ENCODE measurements at regions of chr7 and their contacts with region 1.

Region 1: GRCh38 chr7:151631968-151632749 is 112.5 kb upstream of the RHEB start:
- DNase-seq: peak; percentile 86
- H3K4me3 ChIP-seq: peak overlapping the region; percentile 71 to 82
- H3K27ac ChIP-seq: peak overlapping the region; percentile 84 to 95
- H3K4me1 ChIP-seq: peaks cover 3% of the 10 kb centered on the region
- H3K27me3 ChIP-seq: no peaks in the 10 kb centered on the region
- CTCF ChIP-seq: peak; percentile 43 to 54 (median 52)
- POLR2A ChIP-seq: peak; percentile 61

Region 2: DNA sequence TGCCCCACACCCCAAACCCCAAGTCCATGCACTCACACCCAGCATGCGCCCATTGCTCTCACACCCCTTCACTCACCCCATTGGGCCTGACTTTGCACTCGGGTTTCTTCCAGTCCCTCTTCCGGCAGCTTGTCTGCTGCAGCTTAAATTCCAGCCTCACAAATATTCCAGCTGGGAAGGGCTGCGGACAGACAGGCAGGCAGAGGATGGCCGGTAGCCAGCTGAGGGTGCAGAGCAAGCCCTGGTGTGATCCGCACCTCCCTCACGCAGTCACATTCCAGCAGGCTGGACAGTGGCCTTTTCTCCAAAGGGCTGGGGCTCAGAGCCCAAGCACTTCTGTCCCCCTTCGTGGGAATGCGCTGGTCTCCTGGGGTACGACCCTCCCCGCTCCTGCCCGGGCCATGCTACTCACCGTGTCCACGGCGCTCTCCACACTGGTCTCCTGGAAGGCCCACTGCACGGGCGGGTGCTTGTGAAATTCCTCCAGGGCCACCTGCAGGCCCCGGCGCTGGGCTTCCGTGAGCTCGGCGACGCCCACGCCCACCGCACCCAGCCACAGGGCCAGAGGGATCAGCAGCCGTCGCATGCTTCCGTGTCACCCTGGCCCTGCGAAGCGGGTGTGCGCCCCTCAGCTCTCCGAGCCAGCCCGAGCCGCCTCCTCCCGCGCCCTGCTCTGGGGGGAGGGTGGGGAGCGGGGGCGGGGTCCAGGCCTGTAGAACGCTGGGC is 1292.0 kb before region 1 on chr7:
- intact Hi-C with region 1: no loop called
- DNase-seq: no peak
- H3K4me3 ChIP-seq: peak overlapping the region; percentile 33 to 41
- H3K27ac ChIP-seq: peak overlapping the region; percentile 70 to 81
- H3K4me1 ChIP-seq: no peaks in the 10 kb centered on the region
- H3K27me3 ChIP-seq: peaks cover under 1% of the 10 kb centered on the region
- CTCF ChIP-seq: no peak
- POLR2A ChIP-seq: no peak

Region 3: DNA sequence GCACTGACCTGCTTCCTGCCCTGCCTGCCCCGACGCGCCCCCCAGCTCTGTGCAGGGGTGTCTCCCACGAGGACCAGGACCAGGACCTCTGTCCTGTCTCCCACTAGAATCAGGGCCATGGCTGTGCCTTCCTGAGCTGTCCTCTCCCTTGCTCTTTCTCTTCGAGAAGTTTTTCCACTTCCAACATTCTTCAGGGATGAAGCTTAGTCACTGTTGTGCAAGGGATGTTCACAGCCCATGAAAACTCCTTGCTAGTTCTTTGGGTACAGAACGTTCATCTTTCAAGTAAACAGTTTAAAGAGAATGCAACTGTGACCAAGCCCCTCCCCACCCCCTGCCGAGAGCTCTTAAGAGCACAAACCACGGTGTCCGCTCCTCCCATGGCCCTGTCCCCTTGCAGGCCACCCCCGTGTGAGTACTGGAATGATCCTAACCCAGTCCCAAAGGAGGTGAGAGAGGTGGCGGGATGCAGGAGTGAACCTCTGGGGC is 48.6 kb after region 1 on chr7:
- intact Hi-C with region 1: loop called (anchors 5 kb)
- DNase-seq: peak; percentile 58
- H3K4me3 ChIP-seq: no peak overlapping the region
- H3K27ac ChIP-seq: peak overlapping the region; percentile 85
- H3K4me1 ChIP-seq: peaks cover 12% of the 10 kb centered on the region
- H3K27me3 ChIP-seq: no peaks in the 10 kb centered on the region
- CTCF ChIP-seq: no peak
- POLR2A ChIP-seq: no peak

Region 4: DNA sequence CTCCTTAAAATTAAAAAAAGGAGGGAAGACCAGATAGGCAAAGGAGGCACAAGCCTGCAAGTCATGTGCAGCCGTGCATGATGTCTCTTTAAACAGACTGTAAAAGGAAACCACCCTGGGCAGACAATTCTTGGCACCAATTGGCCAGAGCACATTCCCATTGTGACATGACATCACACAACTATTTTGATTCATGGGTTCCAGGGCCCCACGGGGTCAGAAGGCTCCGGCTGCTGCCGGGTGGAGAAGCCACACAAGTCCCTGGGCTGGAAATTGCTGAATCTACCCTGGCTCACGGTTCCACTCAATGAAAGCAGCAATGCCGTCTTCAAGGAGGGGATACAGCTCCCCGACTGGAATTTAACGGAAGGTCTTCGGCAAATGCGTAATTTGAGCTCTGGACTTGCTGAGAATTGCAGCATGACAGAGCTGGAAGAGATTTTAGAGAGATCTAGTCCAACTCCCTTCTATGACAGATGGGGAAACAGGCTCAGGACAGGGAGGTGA is 104.3 kb after region 1 on chr7:
- intact Hi-C with region 1: loop called (anchors 5 kb)
- DNase-seq: peak; percentile 74
- H3K4me3 ChIP-seq: peak overlapping the region in 1 of 2 donors; percentile 7
- H3K27ac ChIP-seq: peak overlapping the region; percentile 56 to 65
- H3K4me1 ChIP-seq: no peaks in the 10 kb centered on the region
- H3K27me3 ChIP-seq: no peaks in the 10 kb centered on the region
- CTCF ChIP-seq: no peak
- POLR2A ChIP-seq: peak; percentile 25

Measured in prostate gland (tissue), 2 donors.